ENCODE measurements at regions of chr5 and their contacts with region 1.

Region 1: DNA sequence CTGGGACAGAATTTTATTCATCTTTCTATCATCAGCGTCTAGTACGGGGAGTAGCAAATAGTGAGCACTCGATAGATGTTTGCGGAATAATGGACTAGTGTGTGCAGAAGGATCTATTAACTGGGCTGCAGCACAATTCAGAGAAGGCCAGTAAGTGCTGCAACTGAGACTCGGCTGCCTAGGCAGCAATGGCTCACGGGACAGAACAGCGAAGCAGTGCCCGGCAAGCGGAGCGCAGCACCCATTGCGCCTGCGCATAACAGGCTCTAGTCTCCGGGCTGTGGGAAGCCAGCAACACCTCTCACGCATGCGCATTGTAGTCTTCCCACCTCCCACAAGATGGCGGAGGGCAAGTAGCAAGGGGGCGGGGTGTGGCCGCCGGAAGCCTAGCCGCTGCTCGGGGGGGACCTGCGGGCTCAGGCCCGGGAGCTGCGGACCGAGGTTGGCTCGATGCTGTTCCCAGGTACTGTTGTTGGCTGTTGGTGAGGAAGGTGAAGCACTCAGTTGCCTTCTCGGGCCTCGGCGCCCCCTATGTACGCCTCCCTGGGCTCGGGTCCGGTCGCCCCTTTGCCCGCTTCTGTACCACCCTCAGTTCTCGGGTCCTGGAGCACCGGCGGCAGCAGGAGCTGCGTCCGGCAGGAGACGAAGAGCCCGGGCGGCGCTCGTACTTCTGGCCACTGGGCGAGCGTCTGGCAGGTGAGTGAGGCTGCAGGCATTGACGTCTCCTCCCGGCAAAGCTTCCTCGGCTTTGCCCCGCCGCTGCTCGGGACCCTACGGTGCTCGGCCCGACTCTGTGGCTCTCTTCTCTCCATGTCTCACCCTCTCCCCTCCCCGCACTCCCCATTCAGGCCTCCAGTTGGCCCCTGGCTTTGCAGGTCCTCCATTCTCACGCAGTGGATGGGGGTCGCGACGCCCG is 30.2 kb upstream of the APC start:
- DNase-seq: peak; percentile 98 to 99
- ATAC-seq: peak; percentile 99
- H3K4me3 ChIP-seq: peak overlapping the region; percentile 74 to 80
- H3K27ac ChIP-seq: peak overlapping the region; percentile 71 to 93
- H3K4me1 ChIP-seq: peaks cover 2 to 5% of the 10 kb centered on the region in 2 donors
- H3K27me3 ChIP-seq: no peaks in the 10 kb centered on the region

Region 2: GRCh38 chr5:111757355-111758283 is 949.8 kb before region 1 on chr5:
- intact Hi-C with region 1: loop called in 1 of 2 experiments (anchors 10 kb)
- DNase-seq: peak; percentile 97
- ATAC-seq: peak; percentile 92
- H3K4me3 ChIP-seq: peak overlapping the region; percentile 62 to 82
- H3K27ac ChIP-seq: peak overlapping the region; percentile 74 to 78
- H3K4me1 ChIP-seq: no peaks in the 10 kb centered on the region
- H3K27me3 ChIP-seq: no peaks in the 10 kb centered on the region

Region 3: GRCh38 chr5:112669328-112669963 is 38.0 kb before region 1 on chr5:
- intact Hi-C with region 1: no loop called
- DNase-seq: no peak
- ATAC-seq: no peak
- H3K4me3 ChIP-seq: no peak overlapping the region
- H3K27ac ChIP-seq: no peak overlapping the region
- H3K4me1 ChIP-seq: no peaks in the 10 kb centered on the region
- H3K27me3 ChIP-seq: no peaks in the 10 kb centered on the region

Region 4: GRCh38 chr5:112737463-112738190 is 30.2 kb after region 1 on chr5 and contains the start of gene APC:
- intact Hi-C with region 1: loop called in 1 of 2 experiments (anchors 5 kb)
- DNase-seq: peak; percentile 95 to 98
- ATAC-seq: peak; percentile 97
- H3K4me3 ChIP-seq: peak within 1 kb of the TSS; percentile 38 to 93
- H3K27ac ChIP-seq: peak within 1 kb of the TSS in 1 of 2 donors; percentile 71
- H3K4me1 ChIP-seq: peaks cover 0 to 4% of the 10 kb centered on the region in 2 donors
- H3K27me3 ChIP-seq: no peaks in the 10 kb centered on the region
- total RNA-seq, gene APC: 49.8 to 51.6 TPM

Region 5: GRCh38 chr5:112757468-112758208 is 50.2 kb after region 1 on chr5:
- intact Hi-C with region 1: loop called in 1 of 2 experiments (anchors 10 kb)
- DNase-seq: no peak
- ATAC-seq: no peak
- H3K4me3 ChIP-seq: peak overlapping the region in 1 of 2 donors; percentile 34
- H3K27ac ChIP-seq: peak overlapping the region in 1 of 2 donors; percentile 28
- H3K4me1 ChIP-seq: peaks cover 2% of the 10 kb centered on the region in 2 donors
- H3K27me3 ChIP-seq: no peaks in the 10 kb centered on the region

Region 6: GRCh38 chr5:112958093-112959088 is 250.9 kb after region 1 on chr5:
- intact Hi-C with region 1: loop called in 1 of 2 experiments (anchors 5 kb)
- DNase-seq: peak; percentile 81 to 86
- ATAC-seq: peak; percentile 70
- H3K4me3 ChIP-seq: no peak overlapping the region
- H3K27ac ChIP-seq: no peak overlapping the region
- H3K4me1 ChIP-seq: peaks cover 4 to 5% of the 10 kb centered on the region in 2 donors
- H3K27me3 ChIP-seq: no peaks in the 10 kb centered on the region

Measured in aorta (tissue), 5 donors.